ENCODE measurements at regions of chr11 and their contacts with region 1.

Region 1: GRCh38 chr11:46611526-46612304 is 5.3 kb downstream of the HARBI1 start:
- DNase-seq: no peak
- ATAC-seq: peak in 2 of 8 donors; percentile 28 to 47
- H3K4me3 ChIP-seq: no peak overlapping the region
- H3K27ac ChIP-seq: peak overlapping the region in 2 of 10 donors; percentile 20 to 25
- H3K4me1 ChIP-seq: peaks cover 2 to 49% (median 24%) of the 10 kb centered on the region in 9 donors
- H3K27me3 ChIP-seq: no peaks in the 10 kb centered on the region
- CTCF ChIP-seq: no peak

Region 2: GRCh38 chr11:46404476-46405017 is 207.2 kb before region 1 on chr11:
- intact Hi-C with region 1: loop called in 2 of 10 experiments (anchors 5 to 10 kb)
- DNase-seq: no peak
- ATAC-seq: no peak
- H3K4me3 ChIP-seq: no peak overlapping the region
- H3K27ac ChIP-seq: no peak overlapping the region
- H3K4me1 ChIP-seq: peaks cover 5 to 36% (median 16%) of the 10 kb centered on the region in 9 donors
- H3K27me3 ChIP-seq: no peaks in the 10 kb centered on the region
- CTCF ChIP-seq: no peak

Region 3: DNA sequence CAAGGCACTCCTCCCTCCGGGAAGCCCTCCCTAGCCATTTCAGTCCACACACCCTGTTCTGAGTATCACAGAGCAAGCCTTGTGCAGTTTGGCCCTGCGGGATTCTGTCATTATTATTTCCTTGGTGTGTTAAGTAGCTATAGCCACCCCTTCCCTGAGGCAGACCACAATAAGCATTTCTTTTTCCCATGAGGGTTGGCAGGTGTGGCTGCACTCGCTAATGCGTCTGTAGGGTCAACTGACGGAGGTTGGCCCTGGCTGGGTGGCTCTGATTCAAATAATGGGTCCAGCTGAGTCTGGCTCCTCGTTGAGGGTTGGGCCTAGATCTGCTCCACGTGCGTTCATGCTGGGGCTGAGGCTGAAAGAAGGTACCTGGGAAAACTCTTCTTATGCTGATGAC is 112.4 kb after region 1 on chr11:
- intact Hi-C with region 1: no loop called
- DNase-seq: no peak
- ATAC-seq: no peak
- H3K4me3 ChIP-seq: no peak overlapping the region
- H3K27ac ChIP-seq: no peak overlapping the region
- H3K4me1 ChIP-seq: no peaks in the 10 kb centered on the region
- H3K27me3 ChIP-seq: no peaks in the 10 kb centered on the region
- CTCF ChIP-seq: no peak